AG04449 (cell line): ENCODE measurements at regions of chr1 and their contacts with region 1.

Region 1: GRCh38 chr1:93909146-93910050 is at the start of gene GCLM:
- DNase-seq: peak; percentile 61
- H3K4me3 ChIP-seq: peak within 1 kb of the TSS; percentile 76
- CTCF ChIP-seq: peak; percentile 97

Region 2: DNA sequence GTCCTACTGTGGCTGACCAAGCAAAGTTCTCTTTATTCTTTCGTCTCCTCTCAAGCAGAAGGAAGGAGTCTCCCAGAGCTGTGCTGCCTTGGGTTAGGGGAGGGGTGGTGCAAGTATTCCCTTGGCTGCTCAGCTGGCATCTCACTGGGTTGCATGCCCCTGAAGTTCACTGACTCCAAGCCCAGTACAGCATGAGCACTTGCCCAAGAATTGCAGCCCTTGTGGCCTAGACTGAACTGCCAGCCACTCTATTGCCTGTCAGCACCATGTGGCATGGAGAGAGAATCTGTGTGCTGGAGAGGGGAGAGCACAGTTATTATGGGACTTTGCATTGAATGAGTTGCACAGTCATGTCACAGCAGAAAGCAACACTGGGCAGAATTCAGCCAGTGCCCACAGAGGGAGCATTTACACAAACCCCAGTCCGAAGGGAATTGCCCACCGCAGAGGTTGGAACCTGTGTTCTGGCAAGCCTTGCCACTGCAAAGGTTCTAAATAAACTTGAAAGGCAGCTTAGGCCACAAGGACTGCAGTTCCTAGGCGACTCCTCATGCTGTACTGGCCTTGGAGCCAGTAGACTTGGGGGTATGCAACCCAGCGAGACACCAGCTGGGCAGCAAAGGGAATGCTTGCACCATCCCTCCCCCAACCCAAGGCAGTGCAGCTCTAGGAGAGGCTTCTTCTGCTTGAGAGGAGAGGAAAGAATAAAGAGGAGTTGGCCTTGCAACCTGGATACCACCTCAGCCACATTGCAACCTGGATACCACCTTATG is 534.9 kb before region 1 on chr1:
- CTCF ChIA-PET with region 1: no interaction called
- POLR2A ChIA-PET with region 1: no interaction called
- DNase-seq: no peak
- H3K4me3 ChIP-seq: no peak overlapping the region
- CTCF ChIP-seq: no peak

Region 3: DNA sequence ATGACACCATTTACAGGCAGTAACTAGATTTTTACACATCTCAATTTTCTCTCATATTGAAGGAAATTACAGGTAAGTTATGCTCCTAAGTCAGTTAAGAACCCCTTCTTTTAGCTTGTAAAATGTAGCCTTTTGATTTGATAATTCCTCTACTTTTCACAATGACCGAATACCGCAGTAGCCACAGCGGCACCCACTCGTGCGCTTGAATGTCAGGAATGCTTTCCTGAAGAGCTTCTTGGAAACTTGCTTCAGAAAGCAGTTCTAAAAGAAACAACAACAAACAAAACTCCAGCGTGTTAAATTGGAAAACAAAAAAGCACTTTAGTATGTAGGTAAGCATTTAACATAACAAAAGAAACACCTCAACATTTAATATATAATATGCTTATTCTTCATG is 20.5 kb before region 1 on chr1:
- CTCF ChIA-PET with region 1: interaction called, 14 read pairs
- POLR2A ChIA-PET with region 1: no interaction called
- DNase-seq: no peak
- H3K4me3 ChIP-seq: no peak overlapping the region
- CTCF ChIP-seq: no peak

Region 4: DNA sequence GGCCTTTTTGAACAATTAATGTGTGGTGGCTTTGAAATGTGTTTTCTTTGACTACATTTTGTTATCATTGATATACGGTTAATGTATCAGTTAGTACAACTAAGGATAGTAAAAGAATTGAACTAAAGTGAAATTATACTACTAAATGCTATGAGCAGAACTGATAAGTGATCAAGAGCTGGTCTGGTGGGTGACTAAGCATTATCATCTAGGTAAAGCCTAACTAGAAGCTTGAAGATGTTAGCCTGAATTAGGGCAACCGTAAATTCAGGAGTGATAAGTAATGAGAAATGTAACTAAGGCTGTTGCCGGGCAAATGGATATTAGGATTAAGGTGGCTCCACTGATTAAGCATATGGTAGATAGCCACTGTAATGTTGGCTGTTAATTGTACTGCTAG is 15.8 kb after region 1 on chr1:
- CTCF ChIA-PET with region 1: interaction called, 49 read pairs
- POLR2A ChIA-PET with region 1: no interaction called
- DNase-seq: no peak
- H3K4me3 ChIP-seq: no peak overlapping the region
- CTCF ChIP-seq: no peak

Region 5: DNA sequence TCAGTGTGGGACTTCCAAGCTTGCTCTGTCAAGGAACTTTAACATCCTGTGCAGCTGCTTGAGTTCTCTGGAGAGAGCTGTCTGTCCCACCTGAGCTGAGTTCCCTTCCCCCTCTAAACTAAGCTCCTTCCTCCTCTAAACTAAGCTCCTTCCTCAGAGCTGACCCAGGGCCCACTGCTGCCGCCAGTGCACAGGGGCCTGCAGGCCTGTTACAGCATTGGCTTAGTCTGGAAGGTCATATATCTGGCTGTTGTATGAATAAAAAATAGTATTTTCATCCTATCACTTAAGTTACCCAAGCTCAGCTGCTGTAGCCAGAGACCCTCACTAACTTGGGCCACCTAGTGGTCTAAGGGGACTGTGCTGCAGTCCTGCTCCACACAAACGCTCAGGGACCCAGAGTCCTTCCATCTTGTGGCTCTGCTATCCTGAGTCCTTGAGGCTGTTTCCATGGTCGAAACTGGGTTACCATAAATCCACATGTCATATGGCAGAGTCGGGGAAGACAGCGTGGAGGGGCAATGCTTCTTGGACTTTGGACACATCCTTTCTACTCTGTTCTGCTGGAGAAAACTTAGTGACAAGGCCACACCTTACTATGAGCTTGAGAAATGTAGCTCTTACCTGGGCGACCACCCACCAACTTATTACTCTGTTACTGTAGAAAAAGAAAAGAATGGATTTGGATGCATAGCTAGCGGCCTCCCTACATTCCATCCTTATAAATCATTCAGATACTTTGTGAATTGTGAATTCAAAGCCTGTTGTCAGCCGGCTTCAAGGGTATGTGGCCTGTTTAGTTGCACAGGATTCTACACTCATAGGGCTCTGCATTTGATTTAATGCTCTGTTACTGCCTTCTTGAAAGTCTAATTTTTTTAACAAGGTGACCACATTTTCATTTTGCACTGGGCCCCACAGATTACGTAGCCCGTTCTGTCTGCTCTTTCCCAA is 71.2 kb after region 1 on chr1:
- CTCF ChIA-PET with region 1: interaction called, 12 read pairs
- POLR2A ChIA-PET with region 1: no interaction called
- DNase-seq: no peak
- H3K4me3 ChIP-seq: no peak overlapping the region
- CTCF ChIP-seq: peak; percentile 14

Region 6: DNA sequence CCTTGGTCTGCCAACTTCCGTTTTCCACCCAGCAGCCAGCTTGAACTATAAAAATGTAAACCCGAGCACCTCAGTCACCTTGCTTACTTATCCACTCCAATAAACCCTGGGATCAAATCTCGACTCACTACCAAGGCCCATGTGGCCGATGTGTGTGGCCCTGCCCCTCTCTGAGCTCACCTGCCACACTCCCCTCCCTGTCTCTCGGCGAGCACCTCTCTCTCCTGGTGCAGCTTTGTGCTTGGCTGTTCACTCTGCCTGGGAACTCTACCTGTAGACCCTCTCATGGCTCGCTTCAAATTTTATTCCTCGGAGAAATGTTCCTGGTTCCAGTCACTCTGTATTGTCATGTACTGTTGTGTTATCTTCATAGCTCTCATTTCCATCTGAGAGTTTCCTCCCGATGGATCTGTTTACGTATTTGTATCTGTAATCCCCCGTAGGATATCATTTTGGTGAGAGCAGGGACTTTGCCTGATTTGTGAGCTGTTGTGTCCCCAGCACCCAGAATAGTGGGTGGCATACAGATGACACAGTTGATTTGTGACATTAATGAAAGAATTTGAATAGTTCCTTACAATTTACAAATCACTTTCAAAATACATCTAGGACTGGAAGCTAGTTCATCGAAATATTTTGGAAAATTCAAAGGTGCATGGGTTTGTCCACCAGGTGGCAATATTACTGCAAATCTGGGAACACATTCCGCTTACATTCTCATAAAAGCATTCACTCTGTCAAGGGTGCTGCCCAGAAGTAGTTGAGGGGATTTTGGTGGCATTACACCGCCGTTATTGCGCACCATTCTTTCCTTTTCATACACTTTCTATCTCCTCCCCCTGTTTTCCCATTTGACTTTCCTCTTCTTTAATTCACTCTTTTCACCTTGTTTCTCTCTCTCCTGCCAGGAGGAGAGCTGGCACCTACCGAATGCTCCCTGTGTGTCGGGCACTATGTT is 116.3 kb after region 1 on chr1:
- CTCF ChIA-PET with region 1: interaction called, 15 read pairs
- POLR2A ChIA-PET with region 1: interaction called, 3 read pairs
- DNase-seq: no peak
- H3K4me3 ChIP-seq: no peak overlapping the region
- CTCF ChIP-seq: peak; percentile 41